Naive thymus-derived CD4-positive, alpha-beta T cell (primary cell): ENCODE measurements at regions of chr2 and their contacts with region 1.

Region 1: DNA sequence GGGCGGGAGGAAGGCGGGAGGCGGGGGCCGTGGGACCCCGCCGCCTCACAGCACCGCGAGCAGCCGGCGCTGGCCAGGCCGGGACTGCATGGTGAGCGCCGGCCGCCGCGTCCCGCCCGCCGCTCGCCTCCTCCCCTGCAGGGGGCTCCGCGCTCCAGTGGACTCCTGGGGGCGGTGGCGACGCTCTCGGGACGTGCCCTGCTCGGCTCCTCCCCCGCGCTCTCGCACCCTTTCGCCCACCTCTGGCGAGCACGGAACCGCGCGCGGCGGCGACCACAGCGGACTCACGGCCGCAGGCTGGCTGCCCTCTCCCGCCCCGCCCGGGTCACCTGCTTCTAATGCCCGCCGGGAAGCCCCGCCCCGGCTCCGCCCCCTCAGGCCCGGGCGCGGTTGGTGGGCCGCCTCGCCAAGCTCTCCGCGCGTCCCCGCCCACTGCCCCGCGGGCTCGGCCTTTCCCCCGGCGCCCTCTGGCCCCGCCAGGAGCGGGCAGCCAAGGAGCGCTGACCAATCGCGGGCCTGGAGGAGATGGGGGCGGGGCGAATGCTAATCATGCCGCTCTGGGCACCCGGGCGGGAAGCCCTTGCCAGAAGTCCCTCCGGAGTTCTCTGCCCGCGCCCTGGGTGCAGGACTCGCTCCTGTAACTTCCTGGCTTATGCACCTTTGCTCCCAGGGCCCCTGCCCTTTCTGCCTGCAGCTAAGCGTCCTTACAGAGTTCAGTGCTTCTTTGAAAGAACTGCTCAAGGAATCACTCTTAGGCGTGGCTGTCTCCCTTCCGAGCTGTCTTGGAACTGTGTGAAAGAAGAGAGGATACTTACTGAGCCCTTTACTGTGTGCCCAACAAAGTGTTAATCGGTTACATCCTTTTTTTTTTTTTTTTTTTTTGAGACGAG is at the start of gene FZD5:
- DNase-seq: peak in 8 of 9 donors; percentile 29 to 92 (median 37)
- ATAC-seq: peak; percentile 91
- H3K4me3 ChIP-seq: peak within 1 kb of the TSS; percentile 63
- H3K4me3 Mint-ChIP-seq: peak within 1 kb of the TSS; percentile 87 to 98 (median 94)
- H3K27ac ChIP-seq: no peak within 1 kb of the TSS
- H3K27ac Mint-ChIP-seq: peak within 1 kb of the TSS in 4 of 9 donors; percentile 31 to 81 (median 66)
- H3K4me1 ChIP-seq: peaks cover 20 to 24% of the 10 kb centered on the region in 2 donors
- H3K4me1 Mint-ChIP-seq: peaks cover 9 to 37% (median 29%) of the 10 kb centered on the region in 7 donors
- H3K27me3 ChIP-seq: peaks cover 0 to 3% of the 10 kb centered on the region in 2 donors
- H3K27me3 Mint-ChIP-seq: peaks cover 14 to 64% (median 23%) of the 10 kb centered on the region in 5 donors
- total RNA-seq, gene FZD5: 0.13 to 0.93 (median 0.27) TPM

Region 2: GRCh38 chr2:208025037-208025813 is 255.4 kb after region 1 on chr2 and contains the start of gene PLEKHM3:
- CTCF ChIA-PET with region 1: interaction called, 3 read pairs
- POLR2A ChIA-PET with region 1: interaction called, 4 read pairs
- intact Hi-C with region 1: loop called (anchors 5 kb)
- DNase-seq: peak; percentile 12 to 80 (median 62)
- ATAC-seq: peak; percentile 93
- H3K4me3 ChIP-seq: peak within 1 kb of the TSS; percentile 88
- H3K4me3 Mint-ChIP-seq: peak within 1 kb of the TSS; percentile 85 to 100 (median 96)
- H3K27ac ChIP-seq: peak within 1 kb of the TSS; percentile 76
- H3K27ac Mint-ChIP-seq: peak within 1 kb of the TSS; percentile 89 to 98 (median 94)
- H3K4me1 ChIP-seq: peaks cover 0 to 4% of the 10 kb centered on the region in 2 donors
- H3K4me1 Mint-ChIP-seq: peaks cover 12 to 34% (median 27%) of the 10 kb centered on the region in 7 donors
- H3K27me3 ChIP-seq: no peaks in the 10 kb centered on the region
- H3K27me3 Mint-ChIP-seq: no peaks in the 10 kb centered on the region
- total RNA-seq, gene PLEKHM3: 6.1 to 19.4 (median 15.5) TPM

Region 3: DNA sequence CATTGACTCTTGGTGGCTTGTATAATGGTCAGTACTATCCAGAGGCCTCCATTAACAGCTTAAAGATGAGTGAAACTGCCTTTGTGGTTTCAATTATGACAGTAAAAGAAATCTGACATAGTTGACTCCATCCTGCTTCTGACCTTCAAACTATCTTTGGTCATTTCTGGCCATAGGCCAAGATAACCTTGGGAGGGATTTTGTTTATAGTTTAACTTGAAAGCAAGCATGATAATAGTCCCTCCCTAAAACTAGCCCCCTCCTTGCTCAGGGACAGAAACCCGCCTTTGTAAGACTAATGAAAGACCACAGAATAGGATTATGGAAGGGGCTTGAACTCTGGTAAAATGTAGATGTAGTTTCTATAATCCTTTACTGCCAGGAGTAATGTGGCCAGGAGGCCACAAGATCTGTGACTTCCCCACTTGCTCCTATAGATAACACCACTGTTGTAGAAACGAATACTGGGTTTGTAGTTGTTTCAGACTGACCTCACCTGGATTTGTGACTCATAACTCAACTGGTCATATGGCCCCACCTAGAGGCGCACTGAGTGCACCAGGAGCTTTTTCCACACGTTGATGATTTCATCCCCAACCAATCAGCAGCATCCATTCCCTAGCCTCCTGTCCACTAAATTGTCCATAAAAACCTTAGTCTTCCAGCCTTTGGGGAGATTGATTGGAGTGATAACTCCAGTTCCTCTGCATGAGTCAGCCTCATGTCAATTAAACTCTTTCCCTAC is 264.1 kb after region 1 on chr2:
- CTCF ChIA-PET with region 1: interaction called, 3 read pairs
- POLR2A ChIA-PET with region 1: no interaction called
- intact Hi-C with region 1: loop called (anchors 5 kb)
- DNase-seq: peak in 5 of 9 donors; percentile 12 to 32 (median 16)
- ATAC-seq: peak; percentile 53
- H3K4me3 ChIP-seq: no peak overlapping the region
- H3K4me3 Mint-ChIP-seq: no peak overlapping the region
- H3K27ac ChIP-seq: no peak overlapping the region
- H3K27ac Mint-ChIP-seq: no peak overlapping the region
- H3K4me1 ChIP-seq: no peaks in the 10 kb centered on the region
- H3K4me1 Mint-ChIP-seq: peaks cover 0 to 2% (median 0%) of the 10 kb centered on the region in 7 donors
- H3K27me3 ChIP-seq: no peaks in the 10 kb centered on the region
- H3K27me3 Mint-ChIP-seq: peaks cover 0 to 17% (median 0%) of the 10 kb centered on the region in 5 donors